Esophagus squamous epithelium (tissue), 5 donors: ENCODE measurements at regions of chr2 and their contacts with region 1.

Region 1: GRCh38 chr2:21042958-21043743 is 722 bp downstream of the APOB start:
- DNase-seq: no peak
- H3K4me3 ChIP-seq: peak overlapping the region in 1 of 4 donors; percentile 35
- H3K27ac ChIP-seq: no peak overlapping the region
- H3K4me1 ChIP-seq: peaks cover 9 to 33% (median 14%) of the 10 kb centered on the region in 3 donors
- H3K27me3 ChIP-seq: peaks cover 0 to 32% (median 0%) of the 10 kb centered on the region in 4 donors
- CTCF ChIP-seq: peak; percentile 85 to 99 (median 94)
- POLR2A ChIP-seq: no peak

Region 2: DNA sequence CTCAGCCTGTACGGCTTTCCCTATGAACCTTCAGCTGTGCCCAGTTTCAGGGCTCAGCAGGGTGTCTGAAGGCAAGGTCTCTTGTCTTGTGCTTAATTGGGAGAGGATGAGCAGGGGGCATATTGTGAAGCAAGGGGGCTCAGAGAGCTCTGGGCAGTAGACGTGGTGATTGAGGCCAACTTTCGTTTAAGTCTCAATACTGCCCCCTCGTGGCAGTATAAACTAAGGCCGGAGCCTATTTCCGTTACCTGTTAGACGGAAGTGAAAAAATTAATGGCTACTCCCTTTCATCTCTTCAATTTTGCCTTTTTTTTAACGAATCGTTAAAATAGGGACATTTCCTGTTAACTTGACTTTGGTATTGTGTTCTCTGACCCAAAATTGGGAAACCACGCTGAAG is 274.0 kb after region 1 on chr2:
- intact Hi-C with region 1: loop called (anchors 10 kb)
- DNase-seq: no peak
- H3K4me3 ChIP-seq: no peak overlapping the region
- H3K27ac ChIP-seq: no peak overlapping the region
- H3K4me1 ChIP-seq: no peaks in the 10 kb centered on the region
- H3K27me3 ChIP-seq: no peaks in the 10 kb centered on the region
- CTCF ChIP-seq: peak; percentile 36 to 62 (median 44)
- POLR2A ChIP-seq: no peak